Vagina (tissue), 2 donors: ENCODE measurements at regions of chr5 and their contacts with region 1.

Region 1: DNA sequence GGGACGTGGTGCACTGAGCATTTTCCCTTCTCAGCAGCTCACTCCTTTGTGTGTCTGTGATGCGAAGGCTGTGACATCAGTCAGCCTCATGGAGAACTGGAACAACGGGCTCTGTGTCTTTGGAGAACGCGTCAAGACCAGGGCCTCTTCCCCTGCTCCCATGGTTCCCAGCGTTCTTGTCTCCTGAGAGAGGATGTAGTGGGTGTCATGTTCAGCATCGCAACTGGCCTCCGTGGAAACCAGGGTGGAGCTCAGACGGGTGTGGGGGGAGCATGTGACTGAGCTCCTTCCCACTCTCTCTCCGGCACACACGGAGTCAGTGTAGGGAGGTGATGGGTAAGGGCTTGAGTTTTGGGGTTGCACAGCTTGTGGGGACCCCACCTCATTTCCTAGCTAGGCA is 59.7 kb downstream of the TENT4A start:
- DNase-seq: no peak
- H3K4me3 ChIP-seq: no peak overlapping the region
- H3K27ac ChIP-seq: no peak overlapping the region
- H3K4me1 ChIP-seq: no peaks in the 10 kb centered on the region
- H3K27me3 ChIP-seq: no peaks in the 10 kb centered on the region
- CTCF ChIP-seq: no peak
- POLR2A ChIP-seq: no peak

Region 2: DNA sequence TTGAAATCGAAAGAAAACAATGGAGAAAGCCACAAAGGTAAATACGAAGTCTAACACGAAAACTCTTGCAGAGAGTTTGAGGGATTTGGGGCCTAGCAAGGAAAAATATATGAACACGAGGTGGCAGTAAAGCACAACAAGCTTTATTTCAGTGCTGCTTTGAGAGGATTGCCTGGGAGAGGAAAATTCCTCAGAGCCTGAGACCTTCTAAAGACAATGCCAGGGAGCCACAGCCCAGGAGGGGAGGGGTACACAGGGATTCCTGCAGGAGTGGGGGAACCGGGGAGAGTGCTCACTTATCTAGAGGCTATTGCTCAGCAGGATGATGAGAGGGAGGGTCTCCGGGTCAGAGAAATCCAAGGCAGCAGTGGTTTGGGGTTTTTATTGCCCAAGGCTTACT is 488.2 kb after region 1 on chr5:
- intact Hi-C with region 1: loop called (anchors 5 kb)
- DNase-seq: no peak
- H3K4me3 ChIP-seq: no peak overlapping the region
- H3K27ac ChIP-seq: no peak overlapping the region
- H3K4me1 ChIP-seq: no peaks in the 10 kb centered on the region
- H3K27me3 ChIP-seq: no peaks in the 10 kb centered on the region
- CTCF ChIP-seq: peak in 2 of 3 experiments; percentile 32 to 64
- POLR2A ChIP-seq: no peak